ENCODE measurements at regions of chr11 and their contacts with region 1.

Region 1: GRCh38 chr11:67391304-67392132 is at the start of gene RAD9A:
- DNase-seq: peak; percentile 82 to 94
- H3K4me3 ChIP-seq: peak within 1 kb of the TSS; percentile 89
- H3K27ac ChIP-seq: peak within 1 kb of the TSS; percentile 54
- H3K4me1 ChIP-seq: peaks cover 12% of the 10 kb centered on the region; the same call in 1 of the 2 replicates
- H3K27me3 ChIP-seq: no peaks in the 10 kb centered on the region
- CTCF ChIP-seq: no peak
- total RNA-seq, gene RAD9A: 62.8 and 79.8 TPM in 2 replicates

Region 2: GRCh38 chr11:67202045-67202444 is 189.5 kb before region 1 on chr11:
- CTCF ChIA-PET with region 1: no interaction called
- POLR2A ChIA-PET with region 1: interaction called, 14 read pairs
- intact Hi-C with region 1: no loop called
- DNase-seq: no peak
- H3K4me3 ChIP-seq: no peak overlapping the region
- H3K27ac ChIP-seq: no peak overlapping the region
- H3K4me1 ChIP-seq: peaks cover 5% of the 10 kb centered on the region; the same call in 1 of the 2 replicates
- H3K27me3 ChIP-seq: no peaks in the 10 kb centered on the region
- CTCF ChIP-seq: no peak

Region 3: DNA sequence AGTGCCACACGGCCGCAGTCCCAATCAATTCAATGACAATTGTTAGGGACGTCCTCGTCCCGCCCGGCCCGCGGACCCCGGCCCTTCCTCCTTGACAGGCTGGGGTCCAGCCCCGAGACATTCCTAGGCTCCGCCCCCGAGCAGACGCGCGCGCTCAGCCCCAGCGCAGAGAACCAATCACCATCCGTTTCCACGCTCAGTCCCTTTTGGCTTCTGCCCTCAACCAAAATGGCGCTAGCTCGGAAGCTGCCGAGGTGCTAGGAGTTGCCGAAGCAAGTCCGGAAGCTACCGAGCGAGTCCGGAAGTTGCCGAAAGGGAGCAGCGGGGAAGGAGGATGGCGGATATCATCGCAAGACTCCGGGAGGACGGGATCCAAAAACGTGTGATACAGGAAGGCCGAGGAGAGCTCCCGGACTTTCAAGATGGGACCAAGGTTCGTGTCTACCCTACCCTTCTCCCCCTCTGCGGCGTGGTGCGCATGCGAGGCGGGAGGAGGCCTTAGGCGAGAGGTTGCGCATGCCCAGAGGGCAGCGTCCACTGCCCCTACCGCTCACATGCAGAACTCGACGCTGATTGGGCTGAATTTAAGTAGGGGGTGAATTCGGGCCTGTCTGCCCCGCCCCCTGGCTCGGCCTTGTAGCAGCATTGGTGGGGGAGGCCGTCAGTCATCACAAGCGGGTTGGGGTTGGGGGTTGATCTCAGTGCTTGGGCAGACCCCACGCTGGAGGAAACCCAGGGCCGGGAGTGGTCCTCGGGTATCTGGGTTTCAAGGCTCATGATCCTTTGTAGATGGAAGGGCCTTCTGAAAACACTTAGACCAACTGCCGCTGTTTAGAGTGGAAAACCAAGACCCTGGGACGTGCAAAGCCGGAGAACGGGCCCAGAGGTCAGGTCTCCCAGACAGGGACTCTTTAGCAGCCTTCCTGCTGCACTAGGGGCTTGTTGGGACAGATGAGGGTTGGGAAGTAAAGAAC is 91.6 kb after region 1 on chr11 and contains the start of gene AIP:
- CTCF ChIA-PET with region 1: no interaction called
- POLR2A ChIA-PET with region 1: interaction called, 16 read pairs
- intact Hi-C with region 1: no loop called
- DNase-seq: peak; percentile 96 to 98
- H3K4me3 ChIP-seq: peak within 1 kb of the TSS; percentile 61
- H3K27ac ChIP-seq: peak within 1 kb of the TSS; percentile 34
- H3K4me1 ChIP-seq: peaks cover 17% of the 10 kb centered on the region
- H3K27me3 ChIP-seq: no peaks in the 10 kb centered on the region
- CTCF ChIP-seq: peak; percentile 34; the same call in 1 of the 2 replicates
- total RNA-seq, gene AIP: 95.3 and 125 TPM in 2 replicates